PC-3 (cell line): ENCODE measurements at regions of chr4 and their contacts with region 1.

Region 1: DNA sequence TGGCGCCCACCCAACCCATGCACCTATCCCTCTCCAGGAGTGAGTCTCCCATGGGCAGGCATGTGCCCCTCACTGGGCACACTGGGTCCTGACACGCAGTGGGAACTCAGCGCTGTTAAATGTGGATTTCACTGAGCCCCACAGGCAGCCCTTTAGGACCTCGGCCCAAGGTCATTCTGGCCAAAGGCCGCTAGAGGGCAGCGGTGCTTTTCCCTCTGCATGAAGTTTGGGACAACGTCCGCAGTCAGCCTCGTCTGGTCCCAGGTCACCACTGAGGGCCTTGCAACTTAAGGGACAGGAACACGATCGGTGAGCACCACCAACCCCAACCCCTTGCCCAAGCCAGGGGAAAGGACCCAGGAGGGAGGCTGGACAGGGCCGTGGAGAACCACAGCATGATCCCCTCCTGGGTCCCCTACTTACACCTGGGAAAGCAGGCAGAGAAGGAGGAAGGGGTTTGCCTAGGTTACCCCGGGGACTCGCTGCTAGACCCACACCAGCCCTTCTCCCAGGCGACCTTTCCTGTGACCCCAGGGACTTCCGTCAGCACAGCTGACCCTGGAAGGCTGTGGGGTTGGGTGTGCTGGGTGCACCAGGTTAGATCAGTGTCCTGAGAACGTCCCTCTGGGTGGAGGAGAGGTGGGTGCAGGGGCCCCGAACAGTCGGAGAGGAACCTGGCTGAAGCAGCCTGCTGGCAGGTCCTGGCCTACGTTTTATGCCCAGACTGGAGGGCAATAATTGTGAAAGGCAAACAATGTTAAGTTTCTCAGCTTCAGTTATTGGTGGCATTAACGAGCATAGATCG is 24.0 kb downstream of the CYTL1 start:
- DNase-seq: peak; percentile 81
- ATAC-seq: peak; percentile 84
- H3K4me3 ChIP-seq: peak overlapping the region; percentile 17; the same call in 1 of the 2 replicates
- H3K27ac ChIP-seq: no peak overlapping the region
- H3K4me1 ChIP-seq: peaks cover 19% of the 10 kb centered on the region
- H3K27me3 ChIP-seq: no peaks in the 10 kb centered on the region
- CTCF ChIP-seq: peak; percentile 82

Region 2: DNA sequence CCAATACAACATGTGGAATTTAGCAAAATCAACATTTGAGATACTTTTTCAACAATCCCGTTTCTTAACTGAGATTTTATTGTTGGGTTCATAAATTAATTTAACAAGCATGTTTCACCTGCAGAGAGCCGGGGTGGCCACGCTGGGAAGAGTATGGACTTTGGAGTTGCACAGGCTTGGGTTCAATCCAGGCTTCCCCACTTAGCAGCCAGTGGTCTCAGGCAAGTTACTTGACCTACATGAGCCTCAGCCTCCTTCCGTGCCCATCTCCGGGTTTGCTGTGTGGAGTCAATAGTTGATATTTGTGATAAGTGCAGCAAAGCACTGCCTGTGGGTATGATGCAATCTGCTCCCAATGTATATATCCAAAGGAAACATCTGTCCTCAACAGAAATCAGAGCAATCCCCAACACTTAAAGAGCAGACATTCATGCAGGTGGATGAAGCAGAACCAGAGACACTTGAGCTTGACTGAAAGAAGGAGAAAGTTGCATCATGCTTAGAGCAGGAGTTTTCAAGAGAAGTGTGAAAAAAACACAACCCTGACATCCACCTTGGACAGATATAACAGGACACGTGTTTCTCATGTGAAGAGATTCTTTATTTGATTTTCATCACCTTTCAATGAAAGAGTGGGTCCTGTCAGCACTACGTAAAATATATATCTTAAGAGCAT is 18.8 kb after region 1 on chr4:
- CTCF ChIA-PET with region 1: no interaction called
- POLR2A ChIA-PET with region 1: no interaction called
- intact Hi-C with region 1: no loop called
- DNase-seq: no peak
- ATAC-seq: no peak
- H3K4me3 ChIP-seq: no peak overlapping the region
- H3K27ac ChIP-seq: no peak overlapping the region
- H3K4me1 ChIP-seq: 0 out of 2 replicates have a peak, but pooled peaks cover 10% of the 10 kb centered on the region
- H3K27me3 ChIP-seq: peaks cover 54% of the 10 kb centered on the region
- CTCF ChIP-seq: no peak

Region 3: GRCh38 chr4:5050520-5051277 is 55.4 kb after region 1 on chr4:
- CTCF ChIA-PET with region 1: no interaction called
- POLR2A ChIA-PET with region 1: no interaction called
- intact Hi-C with region 1: loop called (anchors 5 kb)
- DNase-seq: peak; percentile 75
- ATAC-seq: peak; percentile 90
- H3K4me3 ChIP-seq: peak overlapping the region; percentile 65
- H3K27ac ChIP-seq: no peak overlapping the region
- H3K4me1 ChIP-seq: peaks cover 5% of the 10 kb centered on the region; the same call in 1 of the 2 replicates
- H3K27me3 ChIP-seq: no peaks in the 10 kb centered on the region
- CTCF ChIP-seq: peak; percentile 72

Region 4: DNA sequence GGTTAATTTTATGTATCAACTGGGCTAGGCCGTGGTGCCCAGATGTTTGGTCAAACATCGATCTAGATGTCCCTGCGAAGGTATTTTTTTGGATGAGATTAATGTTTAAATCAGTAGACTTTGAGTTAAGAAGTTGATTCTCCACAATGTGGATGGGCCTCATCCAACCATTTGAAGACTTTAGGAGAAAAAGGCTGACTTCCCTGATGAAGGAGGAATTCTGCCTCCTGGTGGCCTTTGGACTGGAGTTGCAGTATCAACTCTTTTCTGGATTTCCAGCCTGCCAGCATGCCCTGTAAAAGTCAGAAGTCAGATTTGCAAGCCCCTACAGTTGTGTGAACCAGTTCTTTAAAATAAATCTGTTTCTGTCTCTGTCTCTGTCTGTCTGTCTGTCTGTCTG is 147.4 kb after region 1 on chr4:
- CTCF ChIA-PET with region 1: no interaction called
- POLR2A ChIA-PET with region 1: no interaction called
- intact Hi-C with region 1: loop called (anchors 2 kb)
- DNase-seq: peak; percentile 40
- ATAC-seq: no peak
- H3K4me3 ChIP-seq: no peak overlapping the region
- H3K27ac ChIP-seq: no peak overlapping the region
- H3K4me1 ChIP-seq: no peaks in the 10 kb centered on the region
- H3K27me3 ChIP-seq: peaks cover 11% of the 10 kb centered on the region; the same call in 1 of the 2 replicates
- CTCF ChIP-seq: peak; percentile 61